ENCODE measurements at regions of chr6 and their contacts with region 1.

Region 1: GRCh38 chr6:53725791-53726431 is 60.4 kb upstream of the KLHL31 start:
- DNase-seq: peak; percentile 69 to 87
- ATAC-seq: peak; percentile 91 to 98 (median 96)
- H3K4me3 ChIP-seq: no peak overlapping the region
- H3K4me3 Mint-ChIP-seq: no peak overlapping the region
- H3K27ac ChIP-seq: no peak overlapping the region
- H3K27ac Mint-ChIP-seq: no peak overlapping the region
- H3K4me1 ChIP-seq: peaks cover 3% of the 10 kb centered on the region
- H3K4me1 Mint-ChIP-seq: peaks cover 12 to 13% of the 10 kb centered on the region in 2 donors
- H3K27me3 ChIP-seq: no peaks in the 10 kb centered on the region
- H3K27me3 Mint-ChIP-seq: peaks cover 16 to 34% of the 10 kb centered on the region in 2 donors
- CTCF ChIP-seq: peak; percentile 93

Region 2: GRCh38 chr6:53492860-53493634 is 232.9 kb before region 1 on chr6:
- intact Hi-C with region 1: loop called (anchors 1 kb)
- DNase-seq: peak in 1 of 2 donors; percentile 70
- ATAC-seq: peak; percentile 14 to 69 (median 57)
- H3K4me3 ChIP-seq: no peak overlapping the region
- H3K4me3 Mint-ChIP-seq: no peak overlapping the region
- H3K27ac ChIP-seq: no peak overlapping the region
- H3K27ac Mint-ChIP-seq: no peak overlapping the region
- H3K4me1 ChIP-seq: peaks cover 3% of the 10 kb centered on the region
- H3K4me1 Mint-ChIP-seq: peaks cover 0 to 6% of the 10 kb centered on the region in 2 donors
- H3K27me3 ChIP-seq: no peaks in the 10 kb centered on the region
- H3K27me3 Mint-ChIP-seq: peaks cover 9 to 31% of the 10 kb centered on the region in 2 donors
- CTCF ChIP-seq: peak; percentile 84

Region 3: GRCh38 chr6:53651764-53652401 is 74.0 kb before region 1 on chr6:
- intact Hi-C with region 1: loop called (anchors 5 kb)
- DNase-seq: peak; percentile 72 to 90
- ATAC-seq: peak; percentile 85 to 90 (median 86)
- H3K4me3 ChIP-seq: peak overlapping the region; percentile 56
- H3K4me3 Mint-ChIP-seq: peak overlapping the region; percentile 96
- H3K27ac ChIP-seq: peak overlapping the region; percentile 20
- H3K27ac Mint-ChIP-seq: peak overlapping the region; percentile 85 to 93
- H3K4me1 ChIP-seq: peaks cover 11% of the 10 kb centered on the region
- H3K4me1 Mint-ChIP-seq: peaks cover 32 to 36% of the 10 kb centered on the region in 2 donors
- H3K27me3 ChIP-seq: no peaks in the 10 kb centered on the region
- H3K27me3 Mint-ChIP-seq: peaks cover 0 to 3% of the 10 kb centered on the region in 2 donors
- CTCF ChIP-seq: no peak